OCI-LY7 (cell line): ENCODE measurements at regions of chr2 and their contacts with region 1.

Region 1: GRCh38 chr2:88857951-88858411 is 166.5 kb downstream of the RPIA start:
- DNase-seq: peak; percentile 95
- H3K4me3 ChIP-seq: peak overlapping the region; percentile 100
- H3K27ac ChIP-seq: peak overlapping the region; percentile 100
- H3K4me1 ChIP-seq: peaks cover 54% of the 10 kb centered on the region
- CTCF ChIP-seq: no peak

Region 2: DNA sequence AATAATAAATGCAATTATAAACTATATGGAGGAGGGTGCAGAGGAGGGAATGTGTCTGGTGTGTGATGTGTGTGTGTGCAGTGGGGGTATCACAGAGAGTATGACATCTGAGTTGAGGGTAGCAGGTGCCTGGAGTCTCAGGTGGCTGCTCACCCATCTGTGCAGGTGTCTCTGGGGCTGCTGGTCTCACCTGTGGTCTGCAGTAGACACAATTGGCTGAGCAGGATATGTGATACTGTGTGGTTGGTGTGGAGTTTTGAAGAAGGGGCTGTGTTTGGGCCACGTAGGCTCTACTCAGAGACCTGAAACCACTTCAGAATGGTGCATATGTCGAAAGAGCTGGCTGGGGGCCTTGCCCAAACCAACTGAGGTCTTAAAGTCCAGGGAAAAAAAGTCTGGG is 747.2 kb before region 1 on chr2:
- CTCF ChIA-PET with region 1: no interaction called
- POLR2A ChIA-PET with region 1: no interaction called
- intact Hi-C with region 1: no loop called
- DNase-seq: no peak
- H3K4me3 ChIP-seq: no peak overlapping the region
- H3K27ac ChIP-seq: no peak overlapping the region
- H3K4me1 ChIP-seq: no peaks in the 10 kb centered on the region
- CTCF ChIP-seq: no peak

Region 3: GRCh38 chr2:88247531-88247930 is 610.5 kb before region 1 on chr2:
- CTCF ChIA-PET with region 1: no interaction called
- POLR2A ChIA-PET with region 1: no interaction called
- intact Hi-C with region 1: no loop called
- DNase-seq: no peak
- H3K4me3 ChIP-seq: no peak overlapping the region
- H3K27ac ChIP-seq: no peak overlapping the region
- H3K4me1 ChIP-seq: no peaks in the 10 kb centered on the region
- CTCF ChIP-seq: no peak

Region 4: DNA sequence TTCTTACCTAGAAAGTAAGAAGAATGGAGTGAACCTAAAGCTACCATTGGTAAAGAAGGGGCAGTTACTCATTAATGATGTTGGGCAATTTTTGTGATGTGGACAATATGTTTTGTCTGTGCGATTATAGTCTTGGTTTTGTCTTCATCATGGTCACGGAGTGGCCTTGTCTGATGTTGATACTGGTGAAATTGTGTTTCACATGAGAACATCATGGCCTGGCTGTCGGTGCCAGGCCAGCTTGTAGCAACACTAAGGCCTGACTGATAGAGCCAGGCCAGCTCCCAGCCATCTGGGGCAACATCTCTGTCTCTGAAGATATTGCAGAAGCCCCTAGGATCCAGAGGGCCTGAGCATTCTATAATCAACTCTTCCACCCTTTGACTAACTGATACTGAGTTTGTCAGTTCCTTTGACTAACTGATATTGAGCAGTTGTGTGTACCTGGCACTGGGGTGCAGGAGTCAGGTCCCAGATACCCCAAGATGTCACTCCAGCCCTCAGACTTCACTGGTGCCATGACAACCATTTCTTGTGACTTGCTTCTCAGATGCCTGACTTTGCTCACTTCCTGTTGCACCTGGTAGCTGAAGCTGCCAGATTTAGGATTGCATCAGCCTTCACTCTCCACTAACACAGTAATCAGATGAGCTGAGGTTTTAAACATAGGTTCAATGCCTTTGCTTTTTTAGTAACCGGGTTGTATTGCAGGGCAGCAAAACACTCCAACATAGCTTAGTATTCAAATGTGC is 104.0 kb before region 1 on chr2:
- CTCF ChIA-PET with region 1: no interaction called
- POLR2A ChIA-PET with region 1: interaction called, 341 read pairs
- intact Hi-C with region 1: no loop called
- DNase-seq: peak; percentile 98
- H3K4me3 ChIP-seq: peak overlapping the region; percentile 37
- H3K27ac ChIP-seq: peak overlapping the region; percentile 96
- H3K4me1 ChIP-seq: peaks cover 81% of the 10 kb centered on the region
- CTCF ChIP-seq: no peak

Region 5: DNA sequence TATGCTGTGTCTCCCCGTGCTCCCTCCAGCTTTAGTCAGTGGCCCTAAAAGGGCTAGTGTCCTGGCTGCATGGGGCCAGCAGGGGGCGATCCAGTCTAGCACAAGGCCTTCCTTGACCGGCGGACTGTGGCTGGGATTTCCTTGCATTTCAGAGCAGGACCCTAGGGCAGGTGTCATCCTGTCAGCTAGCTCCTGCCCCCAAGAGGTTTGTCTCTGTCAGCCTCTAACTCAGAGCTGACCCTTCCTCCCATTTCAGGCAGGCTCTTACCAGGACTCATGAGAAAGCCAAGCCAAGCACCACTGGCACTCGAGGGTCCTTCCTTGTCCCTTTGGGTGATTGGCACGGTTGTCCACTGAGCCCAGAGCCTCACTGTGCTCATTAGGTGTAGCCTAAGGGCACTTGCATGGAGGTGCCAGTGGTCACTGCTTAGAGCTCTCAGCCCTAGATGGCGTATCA is 26.2 kb before region 1 on chr2:
- CTCF ChIA-PET with region 1: interaction called, 17 read pairs
- POLR2A ChIA-PET with region 1: interaction called, 2,147 read pairs
- intact Hi-C with region 1: loop called (anchors 1 kb)
- DNase-seq: peak; percentile 98
- H3K4me3 ChIP-seq: peak overlapping the region; percentile 66
- H3K27ac ChIP-seq: peak overlapping the region; percentile 100
- H3K4me1 ChIP-seq: peaks cover 99% of the 10 kb centered on the region
- CTCF ChIP-seq: peak; percentile 98

Region 6: DNA sequence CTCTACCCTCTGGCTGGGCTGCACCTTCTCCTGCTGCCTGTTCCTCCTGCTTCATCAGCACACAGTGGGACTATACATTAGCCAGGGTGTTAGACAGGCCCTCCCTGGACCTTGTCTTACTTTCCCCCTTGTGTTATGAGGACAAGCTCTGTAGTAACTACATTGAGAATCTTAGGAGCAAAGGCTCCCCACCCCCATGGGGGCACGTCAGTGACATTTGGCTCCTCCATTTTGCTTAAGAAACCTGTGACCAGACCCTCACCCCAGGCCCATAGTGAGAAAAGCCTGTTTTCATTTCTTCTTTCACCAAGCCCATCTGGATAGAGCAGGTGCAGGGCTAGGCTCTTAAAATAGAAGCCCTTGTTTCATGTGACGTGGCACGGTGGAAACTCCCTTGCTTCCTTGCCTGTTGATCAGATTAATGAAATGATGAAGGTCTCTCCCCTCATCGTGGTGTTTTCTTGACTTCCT is 19.8 kb before region 1 on chr2:
- CTCF ChIA-PET with region 1: interaction called, 3 read pairs
- POLR2A ChIA-PET with region 1: interaction called, 2,147 read pairs
- intact Hi-C with region 1: loop called (anchors 1 kb)
- DNase-seq: peak; percentile 100
- H3K4me3 ChIP-seq: peak overlapping the region; percentile 66
- H3K27ac ChIP-seq: peak overlapping the region; percentile 100
- H3K4me1 ChIP-seq: peaks cover 99% of the 10 kb centered on the region
- CTCF ChIP-seq: no peak

Region 7: DNA sequence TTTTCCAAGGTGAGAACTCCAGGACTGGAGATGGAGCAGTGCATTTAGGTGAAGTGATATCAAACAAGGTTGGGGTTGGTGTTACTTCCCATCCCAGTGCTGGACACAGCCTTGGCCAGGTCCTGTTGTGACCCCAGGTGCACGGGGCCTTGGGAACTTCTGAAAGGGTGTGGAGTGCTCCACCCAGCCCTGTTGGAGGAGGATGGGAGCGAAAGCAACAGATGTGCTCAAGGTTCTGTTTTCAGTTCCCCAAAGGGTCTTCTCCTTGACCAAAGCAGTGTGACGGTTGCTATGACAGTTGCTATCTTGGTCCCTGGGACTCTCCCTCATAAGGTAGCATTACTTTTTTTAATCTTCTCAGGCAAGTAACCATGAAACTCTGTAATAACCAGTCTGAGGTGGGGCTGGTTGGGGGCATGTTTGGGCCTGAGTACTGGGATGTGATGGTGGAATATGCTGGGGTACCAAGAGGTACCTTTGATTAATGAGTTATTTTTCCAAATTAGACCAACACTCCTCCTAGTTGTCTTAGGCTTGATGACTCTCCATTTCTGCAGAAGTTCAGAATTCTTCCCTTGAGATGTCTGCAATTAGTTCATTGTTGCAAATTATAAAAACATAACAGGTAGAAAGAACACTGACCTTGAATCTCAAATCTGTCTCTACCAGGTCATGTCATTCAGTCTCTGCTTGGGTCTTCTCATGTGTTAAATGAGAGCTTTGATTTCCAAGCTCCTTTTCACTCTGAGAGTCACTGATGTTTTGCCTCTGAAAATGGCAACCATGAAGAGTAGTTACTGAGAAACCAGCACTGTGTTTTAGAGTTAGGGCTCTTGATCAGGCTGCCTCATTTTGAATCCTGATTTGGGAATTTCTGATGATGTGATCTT is 12.0 kb before region 1 on chr2:
- CTCF ChIA-PET with region 1: interaction called, 3 read pairs
- POLR2A ChIA-PET with region 1: interaction called, 2,147 read pairs
- intact Hi-C with region 1: loop called (anchors 1 kb)
- DNase-seq: peak; percentile 99
- H3K4me3 ChIP-seq: peak overlapping the region; percentile 38
- H3K27ac ChIP-seq: peak overlapping the region; percentile 100
- H3K4me1 ChIP-seq: peaks cover 99% of the 10 kb centered on the region
- CTCF ChIP-seq: no peak

Region 8: DNA sequence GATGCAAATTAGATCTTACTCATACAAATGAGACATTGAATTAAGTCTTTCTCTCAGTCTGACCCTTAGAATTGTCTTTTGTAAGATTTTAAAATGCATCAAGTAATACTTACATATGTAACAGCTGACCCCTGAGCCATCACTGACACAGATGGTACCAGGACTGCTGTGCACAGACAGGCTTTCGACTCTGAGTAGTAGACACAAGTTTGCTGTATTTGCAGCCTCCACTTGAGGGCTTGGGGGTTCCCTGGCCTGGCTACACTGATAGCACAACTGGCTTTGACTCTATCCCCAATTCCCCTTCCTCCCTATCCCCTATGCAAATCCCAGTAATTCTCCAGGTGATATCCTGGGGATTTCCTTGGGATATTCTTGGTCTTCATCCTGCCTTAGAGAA is 34.2 kb after region 1 on chr2:
- CTCF ChIA-PET with region 1: no interaction called
- POLR2A ChIA-PET with region 1: interaction called, 36 read pairs
- intact Hi-C with region 1: no loop called
- DNase-seq: no peak
- H3K4me3 ChIP-seq: no peak overlapping the region
- H3K27ac ChIP-seq: peak overlapping the region; percentile 60
- H3K4me1 ChIP-seq: peaks cover 60% of the 10 kb centered on the region
- CTCF ChIP-seq: no peak

Region 9: DNA sequence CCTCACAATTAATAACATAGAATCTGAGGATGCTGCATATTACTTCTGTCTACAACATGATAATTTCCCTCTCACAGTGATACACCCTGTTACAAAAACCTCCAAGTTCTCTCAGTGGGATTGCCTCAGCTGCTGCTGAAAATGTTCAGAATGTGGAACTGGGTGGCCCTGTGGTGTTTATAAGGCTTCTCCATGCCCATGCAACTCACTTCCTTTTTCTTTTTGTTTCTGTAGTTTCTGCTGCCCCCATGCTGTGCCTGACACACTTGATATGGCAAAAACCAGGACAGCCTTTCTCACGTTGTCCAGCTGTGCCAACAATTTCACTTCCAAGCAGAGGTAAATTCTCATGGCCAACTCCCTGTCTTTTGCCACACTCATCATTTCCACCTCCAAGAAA is 39.7 kb after region 1 on chr2:
- CTCF ChIA-PET with region 1: no interaction called
- POLR2A ChIA-PET with region 1: interaction called, 36 read pairs
- intact Hi-C with region 1: no loop called
- DNase-seq: no peak
- H3K4me3 ChIP-seq: peak overlapping the region; percentile 90
- H3K27ac ChIP-seq: peak overlapping the region; percentile 84
- H3K4me1 ChIP-seq: peaks cover 21% of the 10 kb centered on the region
- CTCF ChIP-seq: no peak